ENCODE measurements at regions of chr16 and their contacts with region 1.

Region 1: GRCh38 chr16:86519649-86520316 is 9.5 kb downstream of the FOXF1 start:
- DNase-seq: peak in 1 of 2 experiments; percentile 41
- H3K4me3 ChIP-seq: peak overlapping the region; percentile 30; the same call in 1 of the 2 replicates
- H3K27ac ChIP-seq: no peak overlapping the region
- H3K4me1 ChIP-seq: no peaks in the 10 kb centered on the region
- H3K27me3 ChIP-seq: peaks cover 78% of the 10 kb centered on the region
- CTCF ChIP-seq: peak; percentile 88

Region 2: DNA sequence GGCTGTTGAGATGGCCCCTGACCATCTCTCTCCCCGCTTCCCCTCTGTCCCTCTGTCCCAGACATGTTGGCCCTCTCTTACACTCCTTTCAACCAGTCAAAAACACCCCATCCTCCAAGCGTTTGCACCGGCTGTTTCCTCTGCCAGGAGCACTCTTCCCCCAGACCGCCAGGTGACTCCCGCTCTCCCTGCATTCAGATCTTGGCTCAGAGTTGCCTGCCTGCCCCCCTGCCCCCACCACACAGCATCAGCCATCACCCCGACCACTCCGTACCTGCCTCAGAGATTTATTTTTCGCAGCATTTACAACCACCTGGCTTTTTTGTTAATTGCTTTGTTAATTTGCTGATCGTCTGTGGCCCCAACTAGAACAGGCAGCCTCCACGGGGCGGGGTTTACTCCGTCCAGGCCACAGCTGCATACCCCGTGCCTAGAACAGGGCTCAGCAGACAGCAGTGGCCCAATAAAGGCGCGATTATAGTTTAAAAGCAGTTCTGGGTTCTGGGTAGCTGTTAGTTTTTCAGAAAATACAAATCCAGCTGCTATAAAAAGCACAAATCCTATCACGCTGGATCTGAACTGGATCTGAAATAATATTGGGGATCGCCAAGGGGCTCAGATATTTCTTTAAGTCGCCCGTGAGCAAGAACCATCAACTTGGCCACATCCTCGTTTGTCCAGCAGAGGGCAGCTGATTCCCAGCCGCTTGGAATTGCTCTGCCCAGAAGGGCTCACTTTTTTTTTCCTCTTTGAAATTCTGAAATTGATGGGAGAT is 447.3 kb before region 1 on chr16:
- CTCF ChIA-PET with region 1: interaction called, 6 read pairs
- POLR2A ChIA-PET with region 1: no interaction called
- intact Hi-C with region 1: loop called (anchors 1 kb)
- DNase-seq: peak; percentile 35 to 49
- H3K4me3 ChIP-seq: no peak overlapping the region
- H3K27ac ChIP-seq: no peak overlapping the region
- H3K4me1 ChIP-seq: no peaks in the 10 kb centered on the region
- H3K27me3 ChIP-seq: peaks cover 94% of the 10 kb centered on the region
- CTCF ChIP-seq: peak; percentile 81

Region 3: DNA sequence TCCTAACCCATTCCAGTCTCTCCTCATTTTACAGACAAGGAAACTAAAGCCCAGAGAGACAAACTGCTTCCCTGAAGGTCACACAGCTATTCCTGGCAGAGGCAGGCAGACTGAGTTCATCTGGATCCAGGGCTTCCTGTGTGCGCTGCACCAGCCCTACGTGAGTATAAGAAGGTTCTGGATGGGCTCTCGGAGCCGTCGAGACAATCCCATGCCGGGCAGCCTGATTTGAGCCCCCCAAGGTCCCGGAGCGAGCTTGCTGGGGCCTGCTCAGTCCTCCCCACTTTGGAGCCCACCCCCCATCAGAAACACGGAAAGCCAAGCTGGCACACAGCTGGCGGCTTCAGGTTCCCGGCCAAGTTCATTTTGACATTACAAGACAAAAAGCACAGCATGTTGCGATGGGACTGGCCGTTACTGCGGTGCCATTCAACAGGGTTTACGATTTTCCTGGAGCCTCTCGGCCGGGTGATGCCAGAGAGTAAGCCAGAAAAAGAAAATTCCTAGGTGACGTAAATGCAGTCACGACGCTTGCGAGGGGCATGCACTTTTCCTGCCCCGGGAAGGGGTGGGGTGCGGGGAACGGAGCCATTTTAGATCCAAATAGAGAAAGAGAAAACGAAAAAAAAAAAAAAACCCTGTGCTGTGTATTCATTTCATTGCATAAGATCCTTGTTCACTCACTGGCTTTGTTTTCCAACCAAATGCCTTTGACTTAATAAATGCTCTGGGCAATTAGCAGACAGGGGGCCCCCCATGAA is 176.6 kb before region 1 on chr16:
- CTCF ChIA-PET with region 1: no interaction called
- POLR2A ChIA-PET with region 1: no interaction called
- intact Hi-C with region 1: loop called (anchors 10 kb)
- DNase-seq: no peak
- H3K4me3 ChIP-seq: no peak overlapping the region
- H3K27ac ChIP-seq: no peak overlapping the region
- H3K4me1 ChIP-seq: no peaks in the 10 kb centered on the region
- H3K27me3 ChIP-seq: peaks cover 87% of the 10 kb centered on the region
- CTCF ChIP-seq: no peak

Region 4: GRCh38 chr16:86432691-86433090 is 87.1 kb before region 1 on chr16:
- CTCF ChIA-PET with region 1: interaction called, 17 read pairs
- POLR2A ChIA-PET with region 1: no interaction called
- intact Hi-C with region 1: no loop called
- DNase-seq: no peak
- H3K4me3 ChIP-seq: no peak overlapping the region
- H3K27ac ChIP-seq: no peak overlapping the region
- H3K4me1 ChIP-seq: no peaks in the 10 kb centered on the region
- H3K27me3 ChIP-seq: peaks cover 100% of the 10 kb centered on the region
- CTCF ChIP-seq: no peak

Region 5: DNA sequence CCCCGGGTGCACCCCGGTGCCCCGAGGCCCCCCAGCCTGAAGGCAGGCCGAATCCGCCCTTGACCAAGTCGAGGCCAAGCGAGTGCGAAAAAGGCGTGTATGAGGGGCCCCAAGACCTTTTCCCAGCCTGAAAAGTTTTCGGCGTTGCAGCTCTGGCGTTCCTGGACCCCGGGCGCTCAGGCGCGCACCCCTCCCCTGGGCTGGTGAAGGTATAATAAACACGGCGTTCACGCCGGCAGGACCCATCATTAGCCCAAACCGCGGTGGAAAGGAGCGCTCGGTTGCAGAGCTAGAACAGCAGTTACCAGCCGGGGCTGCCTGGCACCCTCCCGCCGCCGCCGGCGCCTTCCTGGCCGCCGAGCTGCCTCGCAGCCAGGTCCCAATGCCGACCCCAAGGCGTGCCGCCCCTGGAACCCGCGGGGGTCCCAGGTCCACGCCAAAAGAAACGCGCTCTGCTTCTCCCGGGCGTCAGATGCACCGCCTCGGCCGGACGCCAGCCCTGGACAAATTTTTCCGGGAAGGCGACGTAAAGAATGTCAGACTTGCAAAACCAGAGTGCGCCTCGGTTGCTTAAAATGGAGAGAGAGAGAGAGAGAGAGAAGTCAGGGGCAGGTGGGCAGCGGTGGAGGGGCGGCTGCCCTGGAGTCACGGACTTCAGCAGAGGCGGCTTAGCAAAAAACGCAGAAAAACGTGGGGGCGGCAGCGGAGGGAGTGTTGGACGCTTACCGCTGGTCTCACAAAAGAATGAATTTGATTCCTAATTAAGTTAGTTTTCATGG is 20.9 kb before region 1 on chr16:
- CTCF ChIA-PET with region 1: no interaction called
- POLR2A ChIA-PET with region 1: no interaction called
- intact Hi-C with region 1: no loop called
- DNase-seq: no peak
- H3K4me3 ChIP-seq: no peak overlapping the region
- H3K27ac ChIP-seq: no peak overlapping the region
- H3K4me1 ChIP-seq: no peaks in the 10 kb centered on the region
- H3K27me3 ChIP-seq: peaks cover 89% of the 10 kb centered on the region
- CTCF ChIP-seq: no peak

Region 6: DNA sequence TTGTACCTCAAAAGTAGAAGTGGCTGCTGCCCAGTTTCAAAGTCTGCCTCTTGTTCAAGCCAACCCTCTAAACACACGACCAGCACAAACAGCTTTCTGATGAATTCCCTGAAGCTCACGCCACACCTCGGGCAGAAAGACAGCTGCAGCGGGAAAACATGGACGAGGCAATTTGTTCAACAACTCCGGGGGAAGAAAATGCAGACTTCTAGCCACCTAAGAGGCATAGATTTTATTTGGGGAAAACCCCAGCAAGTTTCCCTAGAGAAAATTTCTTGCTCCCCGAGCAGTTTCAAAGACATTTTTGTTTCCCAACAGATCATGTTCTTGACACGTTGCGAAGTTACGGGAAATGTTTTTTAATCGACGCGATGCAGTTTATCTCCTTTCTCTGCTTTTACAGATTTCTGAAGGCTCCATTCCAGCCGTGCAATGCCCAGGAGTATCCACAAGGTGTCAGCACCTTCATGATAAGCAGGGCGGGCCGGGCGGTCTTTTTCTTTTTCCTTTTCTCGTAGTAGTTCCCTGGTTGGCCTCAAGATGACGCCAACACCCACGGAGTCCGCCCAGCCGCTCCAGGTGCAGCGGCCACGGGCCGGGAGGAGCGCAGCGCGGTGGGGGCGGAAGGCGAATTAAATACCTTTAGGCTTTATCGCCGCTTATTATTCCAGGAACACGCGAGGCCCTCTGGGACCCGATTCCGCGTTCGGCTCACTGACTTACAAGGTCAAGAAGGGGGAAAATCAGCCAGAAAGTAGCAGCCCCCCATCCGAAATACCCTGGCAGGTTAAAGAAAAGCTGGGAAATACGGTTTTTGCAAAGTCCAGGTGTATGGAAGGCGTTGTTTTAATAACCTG is 43.9 kb after region 1 on chr16:
- CTCF ChIA-PET with region 1: no interaction called
- POLR2A ChIA-PET with region 1: no interaction called
- intact Hi-C with region 1: no loop called
- DNase-seq: peak; percentile 72 to 82
- H3K4me3 ChIP-seq: peak overlapping the region; percentile 19; the same call in 1 of the 2 replicates
- H3K27ac ChIP-seq: no peak overlapping the region
- H3K4me1 ChIP-seq: no peaks in the 10 kb centered on the region
- H3K27me3 ChIP-seq: peaks cover 42% of the 10 kb centered on the region
- CTCF ChIP-seq: peak; percentile 100

Measured in PC-9 (cell line).